ENCODE measurements at regions of chr6 and their contacts with region 1.

Region 1: GRCh38 chr6:20340068-20340848 is 61.4 kb upstream of the E2F3 start:
- DNase-seq: no peak

Region 2: DNA sequence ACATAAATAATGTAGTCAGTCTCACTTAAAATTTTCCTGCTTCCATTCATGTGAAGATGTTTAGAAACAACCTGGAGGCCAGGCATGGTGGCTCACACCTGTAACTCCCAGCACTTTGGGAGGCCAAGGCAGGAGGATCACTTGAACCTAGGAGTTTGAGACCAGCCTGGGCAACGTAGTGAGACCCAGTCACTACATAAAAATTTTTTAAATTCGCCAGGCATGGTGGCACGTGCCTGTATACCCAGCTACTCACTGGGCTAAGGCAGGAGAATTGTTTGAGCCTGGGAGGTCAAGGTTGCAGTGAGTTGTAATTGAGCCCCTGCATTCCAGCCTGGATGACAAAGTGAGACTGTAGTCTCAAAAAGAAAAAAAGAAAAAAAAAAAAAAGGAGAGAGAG is 14.1 kb after region 1 on chr6:
- intact Hi-C with region 1: loop called in 1 of 2 experiments (anchors 1 kb)
- DNase-seq: no peak

Region 3: GRCh38 chr6:20722455-20722854 is 382.2 kb after region 1 on chr6:
- intact Hi-C with region 1: loop called in 1 of 2 experiments (anchors 5 kb)
- DNase-seq: no peak

Region 4: DNA sequence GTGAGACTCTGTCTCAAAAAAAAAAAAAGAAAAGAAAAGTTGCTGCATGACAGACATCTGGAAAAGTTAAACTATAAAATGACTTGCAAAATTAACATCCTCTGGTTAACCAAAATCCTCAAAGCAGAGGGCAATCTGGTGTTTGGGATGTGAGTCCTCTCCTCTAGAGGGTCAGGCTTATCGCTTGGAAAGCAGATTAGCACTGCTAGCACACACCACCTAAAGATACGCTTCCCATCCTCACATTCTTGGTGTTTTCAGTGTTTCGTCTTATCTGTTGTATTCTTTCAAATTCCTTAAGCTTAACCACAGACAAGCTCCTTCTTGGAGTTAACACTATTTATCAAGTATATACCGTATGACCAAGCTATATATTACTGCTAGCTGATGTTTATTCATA is 1451.3 kb after region 1 on chr6:
- intact Hi-C with region 1: no loop called
- DNase-seq: no peak

Measured in posterior vena cava (tissue), 2 donors.